ENCODE measurements at regions of chr2 and their contacts with region 1.

Region 1: GRCh38 chr2:40212804-40213470 is 239.0 kb downstream of the SLC8A1 start:
- DNase-seq: no peak
- H3K4me3 ChIP-seq: no peak overlapping the region
- H3K27ac ChIP-seq: no peak overlapping the region
- H3K4me1 ChIP-seq: no peaks in the 10 kb centered on the region; a peak in 1 of 4 replicates
- H3K27me3 ChIP-seq: no peaks in the 10 kb centered on the region
- CTCF ChIP-seq: peak; percentile 61
- EP300 ChIP-seq: no peak
- RAD21 ChIP-seq: peak; percentile 65

Region 2: GRCh38 chr2:40202798-40203400 is 10.0 kb before region 1 on chr2:
- CTCF ChIA-PET with region 1: interaction called, 23 read pairs
- POLR2A ChIA-PET with region 1: no interaction called
- DNase-seq: no peak
- H3K4me3 ChIP-seq: no peak overlapping the region
- H3K27ac ChIP-seq: peak overlapping the region in 1 of 2 experiments; percentile 55; a peak in 3 of 4 replicates
- H3K4me1 ChIP-seq: peaks cover 0 to 4% of the 10 kb centered on the region in 2 experiments; a peak in 1 of 4 replicates
- H3K27me3 ChIP-seq: no peaks in the 10 kb centered on the region
- CTCF ChIP-seq: no peak
- EP300 ChIP-seq: peak; percentile 37 to 54; a peak in 2 of 4 replicates
- RAD21 ChIP-seq: no peak